ENCODE measurements at regions of chr4 and their contacts with region 1.

Region 1: DNA sequence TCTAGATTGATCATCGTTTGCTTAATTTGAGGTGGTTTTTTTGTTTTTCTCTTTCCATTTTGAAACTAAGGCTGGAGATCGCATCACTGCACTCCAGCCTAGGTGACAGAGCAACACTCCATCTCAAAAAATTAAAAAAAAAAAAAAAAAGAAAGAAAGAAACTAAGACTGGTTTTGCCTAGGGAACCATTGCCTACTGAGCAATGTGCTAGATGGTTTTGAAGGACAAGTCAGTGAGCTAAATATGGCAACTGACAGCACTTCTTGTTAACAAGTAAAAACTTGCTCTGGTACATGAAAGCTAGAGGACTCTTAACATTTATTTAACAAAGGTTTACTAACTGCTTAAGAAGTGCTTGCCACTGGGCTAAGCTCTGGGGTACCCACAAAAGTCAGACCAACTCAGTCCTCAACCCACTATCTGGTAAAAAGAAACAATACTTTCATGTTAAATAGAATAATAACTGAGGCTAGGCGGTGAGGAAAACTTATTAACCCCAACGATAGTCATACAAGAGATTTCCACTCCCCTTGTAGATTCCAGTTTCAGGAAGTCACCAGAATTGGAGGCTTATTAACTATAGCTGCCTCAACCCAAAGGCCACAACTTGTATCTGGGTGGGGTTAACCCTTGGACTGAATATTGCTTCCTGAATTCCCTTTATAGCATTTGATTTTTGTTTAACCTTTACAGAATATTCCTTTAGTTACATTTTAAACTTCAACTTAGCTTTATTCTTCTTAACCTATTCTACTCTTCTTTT is 111.6 kb downstream of the FRYL start:
- DNase-seq: peak; percentile 22
- H3K4me3 Mint-ChIP-seq: no peak overlapping the region
- H3K27ac Mint-ChIP-seq: peak overlapping the region; percentile 1
- H3K4me1 Mint-ChIP-seq: peaks cover 28% of the 10 kb centered on the region
- H3K27me3 Mint-ChIP-seq: no peaks in the 10 kb centered on the region
- CTCF ChIP-seq: no peak

Region 2: GRCh38 chr4:48681856-48682255 is 13.4 kb after region 1 on chr4:
- CTCF ChIA-PET with region 1: interaction called, 6 read pairs
- POLR2A ChIA-PET with region 1: interaction called, 10 read pairs
- intact Hi-C with region 1: no loop called
- DNase-seq: peak; percentile 45
- H3K4me3 Mint-ChIP-seq: no peak overlapping the region
- H3K27ac Mint-ChIP-seq: no peak overlapping the region
- H3K4me1 Mint-ChIP-seq: peaks cover 12% of the 10 kb centered on the region
- H3K27me3 Mint-ChIP-seq: no peaks in the 10 kb centered on the region
- CTCF ChIP-seq: peak; percentile 29

Measured in MCF 10A (cell line).